ENCODE measurements at regions of chr9 and their contacts with region 1.

Region 1: GRCh38 chr9:15357050-15357653 is 50.1 kb upstream of the TTC39B start:
- DNase-seq: peak in 7 of 9 experiments; percentile 13 to 74 (median 30)
- ATAC-seq: peak; percentile 44
- H3K4me3 ChIP-seq: no peak overlapping the region
- H3K4me3 Mint-ChIP-seq: no peak overlapping the region
- H3K27ac ChIP-seq: no peak overlapping the region
- H3K27ac Mint-ChIP-seq: no peak overlapping the region
- H3K4me1 ChIP-seq: peaks cover 19% of the 10 kb centered on the region
- H3K4me1 Mint-ChIP-seq: peaks cover 20% of the 10 kb centered on the region
- H3K27me3 ChIP-seq: no peaks in the 10 kb centered on the region
- H3K27me3 Mint-ChIP-seq: no peaks in the 10 kb centered on the region
- CTCF ChIP-seq: no peak

Region 2: DNA sequence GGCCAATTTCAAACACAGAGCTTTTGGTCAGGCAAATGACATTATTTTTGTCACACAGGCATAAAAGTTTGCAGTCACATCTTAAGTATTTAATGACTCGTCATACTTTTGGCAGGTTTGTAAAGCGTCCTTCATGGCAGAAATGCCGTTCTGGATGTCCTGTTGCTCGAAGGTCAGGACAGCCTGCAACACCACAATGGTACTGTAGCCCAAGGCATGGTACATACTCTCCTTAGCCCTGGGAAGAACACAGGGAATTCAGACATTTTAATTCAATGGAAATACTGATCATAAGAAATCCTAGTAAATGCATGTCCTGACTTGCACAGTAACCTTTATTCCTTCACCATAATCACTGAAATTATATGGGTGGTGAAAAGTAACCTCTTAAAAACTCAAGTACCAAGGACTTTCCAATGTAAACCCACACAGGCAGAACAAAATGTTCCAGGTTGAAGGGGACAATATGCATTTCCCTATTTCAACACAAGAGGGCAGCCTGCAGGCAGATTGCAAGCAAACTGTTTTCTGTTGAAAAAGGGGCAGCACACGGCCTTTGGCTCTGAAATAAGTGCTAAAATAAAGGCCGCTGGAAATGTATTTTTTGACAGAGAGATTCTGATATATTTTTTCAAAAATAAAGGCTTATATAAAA is 145.9 kb before region 1 on chr9:
- CTCF ChIA-PET with region 1: interaction called, 4 read pairs
- POLR2A ChIA-PET with region 1: no interaction called
- intact Hi-C with region 1: loop called in 1 of 2 experiments (anchors 5 kb)
- DNase-seq: peak; percentile 21 to 75 (median 56)
- ATAC-seq: peak; percentile 56
- H3K4me3 ChIP-seq: no peak overlapping the region
- H3K4me3 Mint-ChIP-seq: no peak overlapping the region
- H3K27ac ChIP-seq: no peak overlapping the region
- H3K27ac Mint-ChIP-seq: no peak overlapping the region
- H3K4me1 ChIP-seq: no peaks in the 10 kb centered on the region
- H3K4me1 Mint-ChIP-seq: peaks cover 4% of the 10 kb centered on the region
- H3K27me3 ChIP-seq: no peaks in the 10 kb centered on the region
- H3K27me3 Mint-ChIP-seq: no peaks in the 10 kb centered on the region
- CTCF ChIP-seq: peak; percentile 90

Region 3: GRCh38 chr9:15277400-15278090 is 79.6 kb before region 1 on chr9:
- CTCF ChIA-PET with region 1: interaction called, 5 read pairs
- POLR2A ChIA-PET with region 1: no interaction called
- intact Hi-C with region 1: loop called in 1 of 2 experiments (anchors 1 kb)
- DNase-seq: peak in 2 of 9 experiments; percentile 49 to 59
- ATAC-seq: no peak
- H3K4me3 ChIP-seq: no peak overlapping the region
- H3K4me3 Mint-ChIP-seq: no peak overlapping the region
- H3K27ac ChIP-seq: no peak overlapping the region
- H3K27ac Mint-ChIP-seq: no peak overlapping the region
- H3K4me1 ChIP-seq: no peaks in the 10 kb centered on the region
- H3K4me1 Mint-ChIP-seq: peaks cover 52% of the 10 kb centered on the region
- H3K27me3 ChIP-seq: no peaks in the 10 kb centered on the region
- H3K27me3 Mint-ChIP-seq: no peaks in the 10 kb centered on the region
- CTCF ChIP-seq: peak; percentile 56

Region 4: DNA sequence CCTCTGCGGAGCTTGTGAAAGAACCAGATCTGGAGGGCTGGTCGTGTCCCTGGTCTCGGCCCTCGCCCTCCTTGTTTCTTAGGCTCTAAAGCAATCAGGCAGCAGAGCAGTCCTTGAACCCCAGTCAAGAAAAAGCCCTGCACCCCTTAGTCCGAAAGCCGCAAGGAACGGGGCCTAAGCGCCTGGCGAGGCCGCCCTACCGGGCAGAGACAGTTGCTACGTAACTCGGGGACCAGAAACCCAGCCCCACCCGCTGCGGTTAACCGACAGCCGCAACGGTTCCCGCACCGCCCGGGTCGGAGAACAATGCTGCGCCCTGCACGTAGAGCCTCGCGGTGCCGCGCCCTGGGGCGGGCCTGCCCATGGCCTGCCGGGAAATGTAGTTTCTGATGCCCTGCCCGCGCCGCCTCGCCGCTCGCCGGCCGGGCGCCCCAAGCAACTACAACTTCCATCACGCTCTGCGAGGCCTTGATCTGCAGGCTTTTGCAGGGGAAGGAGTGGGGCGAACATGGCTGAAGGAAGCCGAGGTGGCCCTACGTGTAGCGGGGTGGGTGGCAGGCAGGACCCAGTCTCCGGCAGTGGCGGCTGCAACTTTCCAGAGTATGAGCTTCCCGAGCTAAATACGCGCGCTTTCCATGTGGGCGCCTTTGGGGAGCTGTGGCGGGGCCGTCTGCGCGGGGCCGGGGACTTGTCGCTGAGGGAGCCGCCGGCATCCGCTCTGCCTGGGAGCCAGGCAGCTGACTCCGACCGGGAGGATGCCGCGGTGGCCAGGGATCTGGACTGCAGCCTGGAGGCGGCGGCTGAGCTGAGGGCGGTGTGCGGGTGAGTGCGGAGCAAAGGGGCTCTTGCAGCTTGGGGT is 65.4 kb after region 1 on chr9 and contains the start of gene SNAPC3:
- CTCF ChIA-PET with region 1: interaction called, 3 read pairs
- POLR2A ChIA-PET with region 1: no interaction called
- intact Hi-C with region 1: loop called (anchors 1 to 5 kb)
- DNase-seq: peak; percentile 85 to 96 (median 92)
- ATAC-seq: peak; percentile 95
- H3K4me3 ChIP-seq: peak within 1 kb of the TSS; percentile 65 to 83
- H3K4me3 Mint-ChIP-seq: peak within 1 kb of the TSS; percentile 91
- H3K27ac ChIP-seq: peak within 1 kb of the TSS; percentile 64 to 67
- H3K27ac Mint-ChIP-seq: peak within 1 kb of the TSS; percentile 87
- H3K4me1 ChIP-seq: peaks cover 22% of the 10 kb centered on the region
- H3K4me1 Mint-ChIP-seq: peaks cover 38% of the 10 kb centered on the region
- H3K27me3 ChIP-seq: no peaks in the 10 kb centered on the region
- H3K27me3 Mint-ChIP-seq: no peaks in the 10 kb centered on the region
- CTCF ChIP-seq: no peak
- total RNA-seq, gene SNAPC3: 3.4 to 5.0 TPM

Region 5: DNA sequence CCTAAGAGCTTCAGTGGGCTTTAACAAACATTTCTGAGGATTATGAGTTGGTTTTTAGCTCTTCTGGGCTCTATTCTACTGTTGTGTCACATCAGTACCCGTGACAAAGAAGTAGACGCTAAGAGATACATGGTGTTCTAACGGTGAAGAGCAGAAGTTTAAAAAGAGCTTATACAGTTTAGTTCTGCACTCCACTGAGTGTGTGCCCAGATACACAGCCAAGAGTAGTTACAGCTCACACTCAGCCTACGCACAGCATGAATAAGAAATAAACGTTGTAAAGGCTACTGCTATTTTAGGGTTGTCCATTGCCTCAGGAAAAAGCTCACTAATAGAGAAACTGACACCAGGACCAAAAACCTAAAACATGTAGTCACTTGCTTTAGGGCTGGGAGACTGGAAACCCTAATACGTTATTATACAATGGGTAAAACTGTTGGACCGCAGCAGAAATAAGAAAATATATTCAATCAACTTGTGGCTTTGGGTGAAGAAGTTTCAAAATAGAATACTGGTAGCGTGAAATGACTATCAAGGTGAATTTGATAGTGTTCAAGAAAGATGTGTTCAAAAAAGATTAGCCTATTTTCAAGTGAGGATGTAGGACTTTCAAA is 118.9 kb after region 1 on chr9:
- CTCF ChIA-PET with region 1: no interaction called
- POLR2A ChIA-PET with region 1: no interaction called
- intact Hi-C with region 1: no loop called
- DNase-seq: no peak
- ATAC-seq: no peak
- H3K4me3 ChIP-seq: no peak overlapping the region
- H3K4me3 Mint-ChIP-seq: no peak overlapping the region
- H3K27ac ChIP-seq: no peak overlapping the region
- H3K27ac Mint-ChIP-seq: peak overlapping the region; percentile 10
- H3K4me1 ChIP-seq: no peaks in the 10 kb centered on the region
- H3K4me1 Mint-ChIP-seq: peaks cover 29% of the 10 kb centered on the region
- H3K27me3 ChIP-seq: no peaks in the 10 kb centered on the region
- H3K27me3 Mint-ChIP-seq: no peaks in the 10 kb centered on the region
- CTCF ChIP-seq: no peak

Region 6: GRCh38 chr9:15485836-15486666 is 128.9 kb after region 1 on chr9:
- CTCF ChIA-PET with region 1: no interaction called
- POLR2A ChIA-PET with region 1: no interaction called
- intact Hi-C with region 1: loop called (anchors 1 kb)
- DNase-seq: peak in 2 of 9 experiments; percentile 31 to 51
- ATAC-seq: no peak
- H3K4me3 ChIP-seq: no peak overlapping the region
- H3K4me3 Mint-ChIP-seq: no peak overlapping the region
- H3K27ac ChIP-seq: no peak overlapping the region
- H3K27ac Mint-ChIP-seq: no peak overlapping the region
- H3K4me1 ChIP-seq: no peaks in the 10 kb centered on the region
- H3K4me1 Mint-ChIP-seq: peaks cover 48% of the 10 kb centered on the region
- H3K27me3 ChIP-seq: no peaks in the 10 kb centered on the region
- H3K27me3 Mint-ChIP-seq: no peaks in the 10 kb centered on the region
- CTCF ChIP-seq: peak; percentile 61

Region 7: GRCh38 chr9:15529566-15530324 is 172.6 kb after region 1 on chr9:
- CTCF ChIA-PET with region 1: no interaction called
- POLR2A ChIA-PET with region 1: no interaction called
- intact Hi-C with region 1: loop called in 1 of 2 experiments (anchors 2 kb)
- DNase-seq: no peak
- ATAC-seq: no peak
- H3K4me3 ChIP-seq: no peak overlapping the region
- H3K4me3 Mint-ChIP-seq: no peak overlapping the region
- H3K27ac ChIP-seq: no peak overlapping the region
- H3K27ac Mint-ChIP-seq: no peak overlapping the region
- H3K4me1 ChIP-seq: peaks cover 5% of the 10 kb centered on the region
- H3K4me1 Mint-ChIP-seq: peaks cover 9% of the 10 kb centered on the region
- H3K27me3 ChIP-seq: no peaks in the 10 kb centered on the region
- H3K27me3 Mint-ChIP-seq: peaks cover 3% of the 10 kb centered on the region
- CTCF ChIP-seq: no peak

Measured in CD8-positive, alpha-beta T cell (primary cell).